ENCODE measurements at regions of chr3 and their contacts with region 1.

Region 1: DNA sequence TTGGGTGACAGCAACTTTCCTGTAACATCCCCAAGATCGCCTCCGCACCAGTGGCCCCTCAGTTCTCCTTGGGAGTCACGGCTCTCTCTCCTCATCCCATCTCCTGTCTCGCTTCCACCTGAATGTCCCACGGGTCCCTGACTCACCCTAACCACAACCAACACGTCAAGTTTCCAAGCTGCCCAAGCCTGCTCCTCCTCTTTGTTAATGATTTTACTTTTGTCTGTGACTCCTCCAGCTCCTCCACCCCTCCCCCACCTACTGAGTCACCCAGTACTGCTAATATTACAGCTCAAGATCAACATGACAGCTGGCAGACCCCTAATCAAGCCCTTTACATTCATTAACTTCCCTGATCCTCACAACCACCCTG is 39.3 kb downstream of the BDH1 start:
- DNase-seq: peak; percentile 98
- ATAC-seq: peak; percentile 93
- H3K4me3 ChIP-seq: peak overlapping the region; percentile 55
- H3K27ac ChIP-seq: peak overlapping the region; percentile 96
- H3K4me1 ChIP-seq: peaks cover 39% of the 10 kb centered on the region
- H3K27me3 ChIP-seq: no peaks in the 10 kb centered on the region
- CTCF ChIP-seq: no peak

Region 2: GRCh38 chr3:197533927-197534340 is 17.4 kb after region 1 on chr3:
- CTCF ChIA-PET with region 1: no interaction called
- POLR2A ChIA-PET with region 1: no interaction called
- intact Hi-C with region 1: no loop called
- DNase-seq: no peak
- ATAC-seq: no peak
- H3K4me3 ChIP-seq: no peak overlapping the region
- H3K27ac ChIP-seq: no peak overlapping the region
- H3K4me1 ChIP-seq: peaks cover 12% of the 10 kb centered on the region; the same call in 1 of the 2 replicates
- H3K27me3 ChIP-seq: no peaks in the 10 kb centered on the region
- CTCF ChIP-seq: no peak

Region 3: DNA sequence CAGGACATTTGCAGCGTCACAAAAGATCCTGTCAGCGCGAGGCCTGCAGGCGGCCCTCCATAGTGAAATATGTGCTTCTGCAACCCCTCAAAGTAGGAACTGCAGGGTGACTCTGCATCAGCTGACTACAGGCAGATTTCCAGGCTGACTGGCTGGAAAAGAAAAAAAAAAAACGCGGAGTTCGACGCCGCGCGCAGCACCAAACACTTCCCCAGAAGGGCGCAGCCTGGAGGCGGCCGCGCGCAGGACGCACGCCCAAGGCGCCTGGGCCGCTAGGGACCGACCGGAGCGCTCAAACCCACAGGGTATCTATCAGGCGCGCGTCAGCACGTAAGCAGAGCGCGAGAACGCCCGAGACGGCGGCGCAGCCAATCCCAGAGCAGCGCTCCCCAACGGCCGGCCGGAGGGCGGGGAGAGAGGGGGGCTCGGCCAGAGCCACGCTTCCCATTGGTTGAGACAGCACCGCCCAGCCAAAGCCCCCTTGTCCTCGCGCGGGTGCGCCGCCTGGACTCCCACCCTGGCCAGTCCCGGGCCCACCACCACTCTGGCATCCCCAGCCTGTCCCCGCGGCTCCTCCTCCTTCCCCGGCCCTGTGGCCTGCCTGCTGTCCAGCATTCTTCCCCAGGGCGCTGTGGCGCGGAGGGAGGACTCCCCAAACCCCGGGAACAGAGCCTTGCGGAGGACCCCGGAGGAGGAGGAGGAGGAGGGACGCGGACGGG is 38.2 kb after region 1 on chr3:
- CTCF ChIA-PET with region 1: no interaction called
- POLR2A ChIA-PET with region 1: interaction called, 8 read pairs
- intact Hi-C with region 1: loop called (anchors 2 kb)
- DNase-seq: peak; percentile 98
- ATAC-seq: peak; percentile 98
- H3K4me3 ChIP-seq: peak overlapping the region; percentile 87
- H3K27ac ChIP-seq: peak overlapping the region; percentile 39
- H3K4me1 ChIP-seq: peaks cover 7% of the 10 kb centered on the region
- H3K27me3 ChIP-seq: no peaks in the 10 kb centered on the region
- CTCF ChIP-seq: peak; percentile 71

Region 4: GRCh38 chr3:197590313-197590962 is 73.9 kb after region 1 on chr3:
- CTCF ChIA-PET with region 1: no interaction called
- POLR2A ChIA-PET with region 1: no interaction called
- intact Hi-C with region 1: no loop called
- DNase-seq: peak; percentile 9
- ATAC-seq: peak; percentile 48
- H3K4me3 ChIP-seq: no peak overlapping the region
- H3K27ac ChIP-seq: no peak overlapping the region
- H3K4me1 ChIP-seq: no peaks in the 10 kb centered on the region
- H3K27me3 ChIP-seq: no peaks in the 10 kb centered on the region
- CTCF ChIP-seq: no peak